ENCODE measurements at regions of chr1 and their contacts with region 1.

Region 1: GRCh38 chr1:50978144-50978851 is 8.3 kb downstream of the CDKN2C start:
- DNase-seq: peak; percentile 58
- CTCF ChIP-seq: no peak

Region 2: DNA sequence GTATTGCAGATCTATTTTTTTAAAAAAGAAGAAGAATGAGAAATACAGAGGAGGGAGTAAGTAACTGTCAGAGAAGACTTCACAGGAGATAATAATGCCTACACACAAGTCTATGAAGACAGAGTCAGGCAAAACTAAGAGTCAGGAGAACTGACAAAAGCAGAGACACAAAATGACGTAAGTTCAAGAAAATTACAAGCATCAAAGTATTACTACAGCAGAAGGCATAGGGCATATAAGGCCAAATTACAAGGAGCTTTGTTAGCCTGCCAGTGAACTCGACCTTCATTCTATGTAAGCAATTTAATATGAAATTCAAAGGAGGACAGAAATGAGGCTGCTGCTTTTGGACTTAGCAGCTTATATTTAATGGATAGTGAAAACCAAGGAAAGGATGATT is 42.0 kb before region 1 on chr1:
- CTCF ChIA-PET with region 1: no interaction called
- POLR2A ChIA-PET with region 1: no interaction called
- DNase-seq: no peak
- CTCF ChIP-seq: no peak

Region 3: DNA sequence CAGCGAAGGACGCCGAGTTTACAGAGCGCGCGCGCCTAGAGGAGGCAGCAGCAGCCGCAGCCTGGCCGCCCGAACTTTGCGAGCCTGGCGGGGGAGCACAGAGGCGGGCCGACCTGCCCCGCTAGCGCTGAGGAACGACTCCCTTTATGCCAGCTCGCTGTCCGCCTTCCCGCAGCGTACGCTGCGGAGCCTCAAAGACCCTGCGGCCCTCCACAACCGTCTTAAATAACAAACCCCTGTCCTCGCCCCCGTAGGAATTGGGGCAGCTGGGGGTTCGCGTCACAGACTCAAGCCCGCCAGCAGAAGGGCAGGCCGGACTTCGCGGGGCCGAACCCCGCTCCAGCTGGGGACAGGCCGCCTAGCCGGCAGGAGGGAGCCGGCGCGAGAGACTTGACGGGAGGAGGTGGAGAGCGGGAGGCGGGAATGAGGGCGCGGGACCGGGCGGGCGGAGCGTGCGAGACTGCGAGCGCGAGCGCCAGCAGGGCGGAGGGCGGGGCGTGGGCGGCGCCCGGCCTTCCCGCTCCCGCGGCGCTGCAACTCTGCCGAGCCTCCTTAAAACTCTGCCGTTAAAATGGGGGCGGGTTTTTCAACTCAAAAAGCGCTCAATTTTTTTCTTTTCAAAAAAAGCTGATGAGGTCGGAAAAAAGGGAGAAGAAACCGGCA is 10.0 kb before region 1 on chr1:
- CTCF ChIA-PET with region 1: interaction called, 11 read pairs
- POLR2A ChIA-PET with region 1: interaction called, 9 read pairs
- DNase-seq: peak; percentile 88
- CTCF ChIP-seq: peak; percentile 44

Measured in GM10248 (cell line).